Posterior cingulate gyrus (tissue), 11 donors: ENCODE measurements at regions of chr10 and their contacts with region 1.

Region 1: DNA sequence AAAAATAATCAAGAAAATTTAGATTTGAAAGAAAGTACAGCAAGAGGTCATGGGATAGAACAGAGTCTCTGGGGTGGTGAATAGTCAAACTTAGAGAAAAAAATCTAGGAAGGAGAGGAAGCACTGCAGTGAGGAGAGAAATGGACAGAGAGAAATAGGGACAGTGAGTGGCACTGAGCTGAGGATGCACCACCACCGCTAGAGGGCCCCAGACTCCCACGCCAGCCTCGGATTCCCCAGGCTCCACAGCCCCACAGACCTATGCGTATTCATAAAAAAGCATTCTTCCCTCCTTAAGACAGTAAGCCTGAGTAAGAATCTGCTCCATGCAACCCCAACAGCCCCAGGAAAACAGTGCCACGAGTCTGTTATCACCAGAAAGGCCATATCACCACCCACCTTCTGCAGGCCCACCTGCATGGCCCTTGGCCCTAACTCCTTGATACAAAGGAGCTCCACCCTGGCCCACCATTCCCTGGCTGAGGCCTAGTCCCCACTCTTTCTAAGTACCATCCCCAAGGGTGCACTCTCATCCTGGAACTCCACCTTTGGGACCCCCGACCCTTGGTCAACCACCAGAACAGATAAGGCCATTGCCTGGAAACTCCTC is 91.0 kb downstream of the ALOX5 start:
- DNase-seq: peak; percentile 76 to 97 (median 86)

Region 2: GRCh38 chr10:45008524-45009161 is 456.4 kb before region 1 on chr10:
- intact Hi-C with region 1: loop called (anchors 10 kb)
- DNase-seq: peak in 2 of 10 donors; percentile 2 to 75

Region 3: DNA sequence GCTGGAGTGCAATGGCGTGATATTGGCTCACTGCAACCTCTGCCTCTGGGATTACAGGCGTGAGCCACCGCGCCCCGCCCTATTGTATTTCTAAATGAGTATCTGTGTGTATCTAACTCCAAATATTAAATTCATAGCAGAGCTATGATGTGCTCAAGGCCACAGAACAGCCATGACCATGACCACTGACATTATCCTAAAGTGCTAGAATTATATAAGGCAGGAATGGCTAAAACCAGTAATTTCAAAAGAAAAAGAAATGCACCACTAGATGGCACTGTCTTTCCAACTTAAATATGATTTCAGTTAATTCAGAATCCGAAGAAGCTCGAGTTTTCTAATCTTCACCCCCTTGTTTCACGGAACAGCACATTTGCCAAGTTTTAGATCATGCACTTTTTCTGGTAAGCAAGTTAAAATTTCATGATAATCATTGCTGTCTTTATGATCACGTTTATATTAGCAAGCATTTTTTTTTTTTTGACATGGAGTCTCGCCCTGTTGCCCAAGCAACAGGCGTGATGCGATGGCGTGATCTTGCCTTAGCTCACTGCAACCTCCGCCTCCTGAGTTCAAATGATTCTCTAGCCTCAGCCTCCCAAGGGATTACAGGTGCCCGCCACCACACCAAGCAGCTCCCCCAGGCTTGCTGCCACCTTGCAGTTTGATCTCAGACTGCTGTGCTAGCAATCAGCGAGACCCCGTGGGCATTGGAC is 214.9 kb before region 1 on chr10:
- intact Hi-C with region 1: loop called (anchors 10 kb)
- DNase-seq: peak in 3 of 10 donors; percentile 11 to 71 (median 65)

Region 4: DNA sequence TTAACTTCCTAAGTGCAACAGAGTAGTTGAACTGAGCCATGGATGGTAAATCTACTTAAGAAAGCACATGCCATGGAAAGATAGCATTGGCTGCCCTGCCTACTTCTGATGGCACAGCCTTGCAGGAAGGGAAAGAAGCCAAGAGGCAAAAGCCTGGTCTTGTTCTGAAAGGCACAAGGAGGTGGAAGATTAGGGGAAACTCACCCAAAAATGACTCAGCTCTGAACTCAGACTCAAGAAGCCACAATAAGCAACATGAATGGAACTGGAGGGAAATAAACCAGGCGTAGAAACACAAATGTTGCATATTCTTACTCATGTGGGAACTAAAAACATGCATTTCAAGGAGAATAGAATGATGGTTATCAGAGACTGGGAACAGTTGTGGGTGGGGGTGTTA is 111.9 kb before region 1 on chr10:
- intact Hi-C with region 1: no loop called
- DNase-seq: no peak

Region 5: GRCh38 chr10:45379951-45380461 is 85.1 kb before region 1 on chr10:
- intact Hi-C with region 1: no loop called
- DNase-seq: peak in 2 of 10 donors; percentile 62 to 80

Region 6: DNA sequence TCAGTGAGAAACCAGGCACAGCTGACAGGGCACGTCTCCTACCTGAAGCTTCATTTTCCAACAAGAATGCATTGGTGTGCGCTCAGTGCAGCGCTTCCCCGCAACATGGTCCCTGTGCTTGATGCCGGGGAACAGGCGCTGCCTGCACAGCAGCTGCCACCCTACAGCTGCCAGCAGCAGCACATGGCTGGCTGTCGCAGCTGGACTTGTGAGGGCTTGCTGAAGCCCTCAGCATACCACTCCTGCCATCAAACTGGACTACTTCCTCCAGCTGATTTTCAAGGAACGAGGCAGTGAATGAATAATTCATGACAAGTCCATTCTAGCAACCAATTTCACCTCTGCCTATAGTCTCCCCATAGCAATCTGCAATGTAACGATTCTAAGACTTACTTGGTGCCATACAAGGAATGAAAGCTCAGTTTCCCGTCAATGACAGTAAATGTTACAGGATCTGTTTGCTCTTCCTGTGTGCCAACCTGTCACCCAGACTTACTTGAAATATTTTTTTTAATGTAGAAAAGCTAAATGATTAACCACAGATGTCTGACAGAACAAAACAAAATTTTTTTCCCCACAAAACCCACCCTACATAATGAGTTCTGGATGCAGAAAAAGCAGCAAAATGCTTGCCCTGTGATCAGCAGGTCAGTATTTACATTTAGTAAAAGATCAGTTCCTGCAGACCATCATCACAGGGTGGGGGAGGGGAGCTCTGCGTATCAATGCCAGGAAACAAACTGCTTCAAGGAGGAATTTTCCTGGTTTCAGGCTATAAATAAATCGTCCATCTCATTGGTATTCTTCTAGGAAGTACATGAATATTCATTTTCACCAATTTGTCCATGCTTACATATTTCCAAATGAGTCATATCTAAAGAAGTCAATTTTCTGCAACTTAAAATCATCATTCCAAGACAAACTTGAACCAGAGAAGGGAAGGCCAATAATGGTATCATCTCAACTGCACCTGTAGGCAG is 49.5 kb after region 1 on chr10:
- intact Hi-C with region 1: loop called (anchors 5 kb)
- DNase-seq: peak; percentile 42 to 96 (median 62)

Region 7: GRCh38 chr10:45594276-45595106 is 129.4 kb after region 1 on chr10:
- intact Hi-C with region 1: loop called (anchors 2 kb)
- DNase-seq: peak; percentile 86 to 99 (median 90)

Region 8: DNA sequence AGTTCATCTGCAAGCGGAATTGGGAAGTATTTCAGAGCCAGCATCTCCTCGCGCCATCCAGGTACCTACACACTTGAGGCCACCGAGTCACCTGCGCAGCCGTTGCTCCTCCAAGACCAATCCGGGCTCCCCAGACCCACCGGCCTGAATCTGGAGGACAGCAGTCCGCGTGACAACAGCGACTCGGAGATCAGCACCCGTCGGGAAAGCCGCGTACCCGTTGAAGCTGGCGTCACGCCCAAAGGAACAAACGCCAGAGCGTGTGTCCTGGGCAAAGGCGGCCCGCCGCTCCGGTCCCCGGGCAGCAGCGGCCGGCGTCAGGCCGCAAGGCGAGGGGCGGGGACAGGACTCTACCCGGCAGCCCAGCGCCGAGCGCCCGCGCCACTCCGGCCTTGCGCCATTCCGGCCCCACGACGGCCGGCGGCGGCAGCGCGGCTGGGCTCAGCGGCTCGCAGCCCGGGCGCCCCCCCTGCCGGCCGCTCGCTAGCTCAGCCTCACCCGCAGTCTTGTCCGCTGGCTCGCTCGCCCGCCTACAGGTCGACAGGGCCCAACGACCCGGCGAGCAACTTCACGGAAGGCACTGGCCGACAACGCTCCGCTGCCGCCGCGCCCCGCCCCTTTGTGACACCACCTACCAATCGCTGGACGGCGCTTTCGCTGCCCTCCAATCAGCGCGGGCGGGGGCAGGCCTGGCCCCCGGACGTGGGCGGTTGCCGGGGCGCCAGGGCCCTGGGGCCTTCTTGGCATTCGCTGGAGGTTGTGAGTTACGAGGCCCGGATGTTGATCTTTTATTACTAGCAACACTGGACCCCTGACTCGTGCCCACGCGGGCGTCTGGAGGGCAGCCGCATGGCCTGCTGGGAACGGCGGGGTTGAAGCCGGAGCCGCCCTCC is 207.4 kb after region 1 on chr10 and contains the start of gene ZFAND4:
- intact Hi-C with region 1: loop called (anchors 1 kb)
- DNase-seq: peak; percentile 88 to 99 (median 93)

Region 9: GRCh38 chr10:46064271-46064957 is 599.4 kb after region 1 on chr10:
- intact Hi-C with region 1: no loop called
- DNase-seq: no peak